ENCODE measurements at regions of chr10 and their contacts with region 1.

Region 1: DNA sequence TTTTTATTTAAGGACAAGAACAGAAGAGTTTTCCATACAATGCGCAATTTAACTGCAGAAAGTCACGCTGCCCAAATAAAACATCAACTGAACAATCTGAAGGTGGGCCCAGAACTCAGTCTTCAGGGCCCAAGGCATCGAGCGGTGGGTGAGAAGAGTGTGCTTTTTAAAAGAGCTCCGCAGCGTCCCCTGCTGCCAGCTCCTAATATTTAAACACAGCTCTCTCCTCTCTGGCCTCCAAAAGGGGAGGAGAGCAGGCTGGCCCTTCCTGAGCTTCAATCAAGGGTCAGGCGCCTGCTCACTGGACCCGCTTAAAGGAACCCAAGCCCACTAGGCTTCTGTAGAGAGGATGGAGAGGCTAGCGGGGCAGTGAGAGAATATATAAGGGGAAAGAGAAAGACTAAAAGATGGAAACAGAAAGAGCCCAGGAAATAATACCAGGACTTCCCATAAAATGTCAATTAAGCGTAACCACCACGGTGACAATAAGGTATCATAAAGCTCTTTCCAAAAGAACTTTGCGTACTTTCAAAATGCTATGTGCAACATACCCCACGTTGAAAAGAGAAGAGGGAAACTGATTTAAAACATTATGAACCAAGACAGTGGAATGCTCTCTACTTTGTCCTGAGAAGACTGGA is 2.8 kb downstream of the FAM53B start:
- DNase-seq: peak; percentile 84
- H3K4me3 Mint-ChIP-seq: peak overlapping the region; percentile 72
- H3K27ac Mint-ChIP-seq: peak overlapping the region; percentile 82
- H3K4me1 Mint-ChIP-seq: peaks cover 74% of the 10 kb centered on the region
- H3K27me3 Mint-ChIP-seq: peaks cover 15% of the 10 kb centered on the region

Region 2: DNA sequence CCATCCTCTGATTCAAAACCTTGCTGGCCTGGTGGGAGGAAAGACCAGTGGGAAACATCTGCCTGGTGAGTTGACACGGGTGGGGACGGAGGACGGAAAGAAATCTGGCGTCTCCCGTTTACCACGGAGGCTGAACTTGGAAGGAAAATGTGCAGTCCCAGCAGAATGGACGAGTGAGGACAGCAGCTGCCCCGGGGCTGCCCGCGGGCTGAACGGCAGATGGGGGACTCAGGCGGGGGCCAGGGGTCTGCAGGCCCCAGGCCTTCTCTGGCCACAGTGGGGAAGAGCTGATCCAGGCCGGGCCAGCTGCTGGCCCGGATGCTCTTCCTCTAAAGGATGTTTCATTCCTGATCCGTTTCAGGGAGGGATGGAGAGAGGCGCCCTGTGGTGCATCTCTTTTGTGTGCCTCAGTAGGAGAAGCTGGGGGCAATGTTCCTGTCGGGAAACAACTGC is 500.5 kb before region 1 on chr10:
- CTCF ChIA-PET with region 1: no interaction called
- DNase-seq: no peak
- H3K4me3 Mint-ChIP-seq: no peak overlapping the region
- H3K27ac Mint-ChIP-seq: no peak overlapping the region
- H3K4me1 Mint-ChIP-seq: no peaks in the 10 kb centered on the region
- H3K27me3 Mint-ChIP-seq: no peaks in the 10 kb centered on the region

Region 3: GRCh38 chr10:124530215-124530665 is 211.2 kb before region 1 on chr10:
- CTCF ChIA-PET with region 1: interaction called, 24 read pairs
- DNase-seq: peak; percentile 92
- H3K4me3 Mint-ChIP-seq: no peak overlapping the region
- H3K27ac Mint-ChIP-seq: no peak overlapping the region
- H3K4me1 Mint-ChIP-seq: peaks cover 6% of the 10 kb centered on the region
- H3K27me3 Mint-ChIP-seq: no peaks in the 10 kb centered on the region

Region 4: DNA sequence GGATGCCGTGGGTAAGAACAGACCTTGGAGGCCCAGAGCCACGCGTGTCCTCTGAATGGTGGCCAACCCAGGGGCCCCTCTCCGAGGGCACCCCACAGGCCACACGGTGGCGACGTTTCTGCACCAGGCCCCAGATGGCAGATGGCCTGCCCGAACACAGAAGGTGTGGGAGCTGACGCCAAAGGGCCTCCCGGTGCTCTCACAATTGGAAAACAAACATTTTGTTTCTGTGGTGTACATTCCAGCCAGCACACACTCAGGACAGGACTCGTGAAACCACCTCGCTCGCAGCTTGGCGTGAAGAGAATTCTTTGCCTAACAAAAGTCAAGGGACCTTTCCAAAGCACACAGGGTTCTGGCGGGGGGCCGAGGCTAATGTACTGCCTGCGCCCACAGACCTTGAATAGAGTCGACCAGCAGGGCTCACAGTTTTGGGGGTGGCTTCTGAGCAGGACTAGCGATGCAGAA is 109.3 kb before region 1 on chr10:
- CTCF ChIA-PET with region 1: interaction called, 19 read pairs
- DNase-seq: peak; percentile 59
- H3K4me3 Mint-ChIP-seq: no peak overlapping the region
- H3K27ac Mint-ChIP-seq: no peak overlapping the region
- H3K4me1 Mint-ChIP-seq: peaks cover 51% of the 10 kb centered on the region
- H3K27me3 Mint-ChIP-seq: no peaks in the 10 kb centered on the region

Region 5: GRCh38 chr10:124697830-124698544 is 43.4 kb before region 1 on chr10:
- CTCF ChIA-PET with region 1: interaction called, 60 read pairs
- DNase-seq: peak; percentile 62
- H3K4me3 Mint-ChIP-seq: no peak overlapping the region
- H3K27ac Mint-ChIP-seq: peak overlapping the region; percentile 96
- H3K4me1 Mint-ChIP-seq: peaks cover 100% of the 10 kb centered on the region
- H3K27me3 Mint-ChIP-seq: no peaks in the 10 kb centered on the region

Region 6: GRCh38 chr10:124719213-124719851 is 22.1 kb before region 1 on chr10:
- CTCF ChIA-PET with region 1: interaction called, 31 read pairs
- DNase-seq: peak; percentile 84
- H3K4me3 Mint-ChIP-seq: peak overlapping the region; percentile 52
- H3K27ac Mint-ChIP-seq: peak overlapping the region; percentile 99
- H3K4me1 Mint-ChIP-seq: peaks cover 96% of the 10 kb centered on the region
- H3K27me3 Mint-ChIP-seq: no peaks in the 10 kb centered on the region

Region 7: GRCh38 chr10:124864421-124865193 is 123.2 kb after region 1 on chr10:
- CTCF ChIA-PET with region 1: no interaction called
- DNase-seq: no peak
- H3K4me3 Mint-ChIP-seq: no peak overlapping the region
- H3K27ac Mint-ChIP-seq: no peak overlapping the region
- H3K4me1 Mint-ChIP-seq: no peaks in the 10 kb centered on the region
- H3K27me3 Mint-ChIP-seq: no peaks in the 10 kb centered on the region